ENCODE measurements at regions of chr4 and their contacts with region 1.

Region 1: DNA sequence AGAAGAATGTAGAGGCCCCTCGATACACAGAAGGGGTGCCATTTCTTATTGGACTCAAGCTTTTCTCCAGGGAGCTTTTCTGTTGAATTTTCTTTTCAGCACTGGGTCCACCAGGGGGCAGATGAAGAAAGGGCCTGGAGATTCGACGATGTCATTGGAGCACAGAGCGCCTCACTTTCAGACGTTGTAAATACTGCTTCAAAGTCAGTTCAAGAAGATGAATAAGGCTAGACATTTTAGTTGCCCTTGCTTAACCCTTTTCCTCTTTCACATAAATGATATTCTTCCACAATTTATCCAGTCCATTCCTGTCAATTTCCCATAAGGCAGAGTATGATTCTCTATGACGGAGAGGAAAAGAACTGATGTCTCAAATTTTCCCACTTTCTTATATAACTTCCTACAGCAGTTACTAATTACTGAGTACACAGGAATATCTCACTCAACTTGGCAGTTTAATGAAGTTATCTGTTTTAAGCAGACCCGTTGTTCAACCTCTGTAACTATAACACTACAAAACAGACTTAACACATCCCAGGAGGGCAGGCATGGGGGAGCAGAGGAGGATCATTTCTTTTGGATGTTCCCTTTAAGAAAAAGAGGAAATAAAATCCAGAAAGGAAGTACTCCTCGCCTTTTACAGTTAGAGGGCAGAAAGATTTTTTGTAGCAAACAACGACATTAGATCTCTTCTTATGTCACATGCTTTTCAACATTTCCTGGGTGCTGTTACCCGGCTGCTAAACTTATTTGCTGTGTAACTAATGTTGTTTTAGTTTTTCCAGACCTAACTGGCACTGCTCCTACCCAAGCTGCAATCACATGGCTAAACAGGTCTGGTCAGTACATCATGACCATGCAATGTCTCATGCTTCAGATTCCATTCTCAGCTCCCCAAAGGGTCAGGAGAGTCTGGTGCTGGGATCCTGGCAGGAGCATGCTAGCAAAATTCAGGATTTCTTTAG is 12.2 kb upstream of the CENPU start:
- DNase-seq: peak; percentile 45 to 83
- ATAC-seq: peak; percentile 60 to 88 (median 80)
- H3K4me3 ChIP-seq: peak overlapping the region in 6 of 10 donors; percentile 1 to 20 (median 6)
- H3K27ac ChIP-seq: peak overlapping the region; percentile 67 to 89 (median 82)
- H3K4me1 ChIP-seq: peaks cover 13 to 54% (median 40%) of the 10 kb centered on the region in 9 donors
- H3K27me3 ChIP-seq: no peaks in the 10 kb centered on the region
- CTCF ChIP-seq: peak; percentile 52 to 87 (median 81)

Region 2: GRCh38 chr4:184649026-184649970 is 96.8 kb before region 1 on chr4 and contains the starts of genes CASP3 and PRIMPOL:
- intact Hi-C with region 1: loop called in 1 of 10 experiments (anchors 5 kb)
- DNase-seq: peak; percentile 97 to 99
- ATAC-seq: peak; percentile 92 to 98 (median 96)
- H3K4me3 ChIP-seq: peak within 1 kb of the TSS; percentile 72 to 96 (median 84)
- H3K27ac ChIP-seq: peak within 1 kb of the TSS; percentile 87 to 100 (median 98)
- H3K4me1 ChIP-seq: peaks cover 13 to 60% (median 50%) of the 10 kb centered on the region in 9 donors
- H3K27me3 ChIP-seq: no peaks in the 10 kb centered on the region
- CTCF ChIP-seq: peak in 8 of 9 donors; percentile 10 to 59 (median 38)
- total RNA-seq, gene CASP3: 7.9 to 24.8 (median 13.5) TPM
- total RNA-seq, gene PRIMPOL: 7.2 to 13.7 (median 10.8) TPM

Region 3: GRCh38 chr4:184825896-184826690 is 80.0 kb after region 1 on chr4 and contains the start of gene ACSL1:
- intact Hi-C with region 1: loop called in 5 of 10 experiments (anchors 5 kb)
- DNase-seq: peak; percentile 81 to 88
- ATAC-seq: peak; percentile 84 to 93 (median 88)
- H3K4me3 ChIP-seq: peak within 1 kb of the TSS; percentile 50 to 89 (median 70)
- H3K27ac ChIP-seq: peak within 1 kb of the TSS; percentile 63 to 96 (median 84)
- H3K4me1 ChIP-seq: peaks cover 2 to 53% (median 38%) of the 10 kb centered on the region in 9 donors
- H3K27me3 ChIP-seq: no peaks in the 10 kb centered on the region
- CTCF ChIP-seq: peak in 1 of 9 donors; percentile 8
- total RNA-seq, gene ACSL1: 181 to 526 (median 239) TPM

Region 4: DNA sequence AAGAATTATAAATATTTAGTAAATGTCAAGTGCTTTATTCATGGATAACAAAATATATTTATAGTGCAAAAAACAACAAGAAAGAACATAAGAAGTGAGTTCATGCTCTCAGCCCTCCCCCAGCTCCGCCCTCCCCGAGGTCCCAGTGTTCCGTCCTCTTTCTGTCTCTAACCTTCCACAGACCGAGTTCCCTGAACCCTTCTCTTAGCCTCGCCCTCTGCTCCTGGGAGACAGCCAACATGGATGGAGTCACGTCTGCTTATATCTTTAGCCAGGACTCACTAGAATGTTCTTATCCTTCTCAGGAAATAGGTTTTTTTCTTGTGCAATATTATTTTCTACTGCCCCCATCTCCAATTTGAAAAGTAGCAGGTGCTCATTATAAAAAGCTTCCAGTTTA is 232.1 kb after region 1 on chr4:
- intact Hi-C with region 1: loop called in 9 of 10 experiments (anchors 2 to 5 kb)
- DNase-seq: peak; percentile 63 to 66
- ATAC-seq: peak; percentile 63 to 93 (median 81)
- H3K4me3 ChIP-seq: no peak overlapping the region
- H3K27ac ChIP-seq: peak overlapping the region in 4 of 10 donors; percentile 1 to 60 (median 37)
- H3K4me1 ChIP-seq: peaks cover 0 to 25% (median 19%) of the 10 kb centered on the region in 9 donors
- H3K27me3 ChIP-seq: peaks cover 0 to 4% (median 0%) of the 10 kb centered on the region in 7 donors
- CTCF ChIP-seq: no peak

Region 5: GRCh38 chr4:185096032-185096653 is 350.0 kb after region 1 on chr4:
- intact Hi-C with region 1: loop called in 1 of 10 experiments (anchors 10 kb)
- DNase-seq: peak in 1 of 2 donors; percentile 63
- ATAC-seq: peak in 2 of 8 donors; percentile 34 to 41
- H3K4me3 ChIP-seq: no peak overlapping the region
- H3K27ac ChIP-seq: no peak overlapping the region
- H3K4me1 ChIP-seq: no peaks in the 10 kb centered on the region
- H3K27me3 ChIP-seq: no peaks in the 10 kb centered on the region
- CTCF ChIP-seq: peak; percentile 15 to 83 (median 61)